ENCODE measurements at regions of chrX and their contacts with region 1.

Region 1: GRCh38 chrX:120457766-120458180 is 11.3 kb downstream of the LAMP2 start:
- DNase-seq: peak; percentile 70
- H3K4me3 ChIP-seq: peak overlapping the region; percentile 56
- H3K27ac ChIP-seq: peak overlapping the region; percentile 88
- H3K4me1 ChIP-seq: peaks cover 69% of the 10 kb centered on the region
- CTCF ChIP-seq: no peak

Region 2: GRCh38 chrX:120302434-120302833 is 155.3 kb before region 1 on chrX:
- CTCF ChIA-PET with region 1: no interaction called
- POLR2A ChIA-PET with region 1: no interaction called
- intact Hi-C with region 1: loop called (anchors 5 kb)
- DNase-seq: peak; percentile 85
- H3K4me3 ChIP-seq: peak overlapping the region; percentile 57
- H3K27ac ChIP-seq: peak overlapping the region; percentile 72
- H3K4me1 ChIP-seq: peaks cover 43% of the 10 kb centered on the region
- CTCF ChIP-seq: no peak

Region 3: DNA sequence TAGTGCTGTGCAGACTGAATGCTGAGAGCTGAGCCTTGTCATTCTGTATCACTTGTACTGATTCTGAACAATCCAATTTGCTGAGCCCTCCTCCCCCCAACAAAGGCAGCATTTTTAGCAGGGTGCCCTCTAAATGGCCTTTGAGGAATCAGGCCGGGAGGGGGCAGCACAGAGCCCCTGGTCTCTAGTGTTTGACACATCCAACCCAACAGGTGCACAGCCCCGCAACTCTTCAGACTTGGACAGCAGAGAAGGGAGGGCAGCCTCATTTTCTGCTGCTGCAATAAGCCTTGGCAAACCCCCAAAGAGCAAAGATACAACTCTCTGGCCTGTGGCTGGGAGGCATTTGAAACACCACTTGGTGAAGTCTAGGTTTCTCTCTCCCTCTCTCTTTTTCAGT is 92.5 kb before region 1 on chrX:
- CTCF ChIA-PET with region 1: interaction called, 3 read pairs
- POLR2A ChIA-PET with region 1: interaction called, 8 read pairs
- intact Hi-C with region 1: loop called (anchors 5 kb)
- DNase-seq: peak; percentile 67
- H3K4me3 ChIP-seq: no peak overlapping the region
- H3K27ac ChIP-seq: no peak overlapping the region
- H3K4me1 ChIP-seq: peaks cover 19% of the 10 kb centered on the region
- CTCF ChIP-seq: peak; percentile 79

Region 4: GRCh38 chrX:120499301-120500072 is 41.7 kb after region 1 on chrX:
- CTCF ChIA-PET with region 1: no interaction called
- POLR2A ChIA-PET with region 1: no interaction called
- intact Hi-C with region 1: no loop called
- DNase-seq: no peak
- H3K4me3 ChIP-seq: no peak overlapping the region
- H3K27ac ChIP-seq: no peak overlapping the region
- H3K4me1 ChIP-seq: no peaks in the 10 kb centered on the region
- CTCF ChIP-seq: no peak

Region 5: DNA sequence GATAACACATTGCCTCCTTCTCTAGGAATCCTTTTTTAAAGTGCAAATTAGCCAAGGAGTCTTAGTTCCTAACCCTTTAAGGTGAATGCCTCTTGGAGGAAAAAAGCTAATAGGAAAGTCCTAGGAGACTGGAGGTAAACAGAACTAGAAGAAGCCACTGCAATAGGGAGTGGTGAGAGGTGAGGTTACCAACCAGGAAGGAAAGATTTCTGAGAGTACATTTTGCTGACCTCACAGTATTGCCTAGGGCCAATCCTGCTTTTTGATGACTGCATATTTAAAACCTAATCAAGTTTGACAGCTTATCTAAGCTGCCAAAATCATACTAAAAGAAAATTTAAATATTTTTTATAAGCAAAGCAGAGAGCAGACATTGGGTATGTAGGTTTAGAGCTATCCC is 110.3 kb after region 1 on chrX:
- CTCF ChIA-PET with region 1: no interaction called
- POLR2A ChIA-PET with region 1: no interaction called
- intact Hi-C with region 1: no loop called
- DNase-seq: no peak
- H3K4me3 ChIP-seq: no peak overlapping the region
- H3K27ac ChIP-seq: no peak overlapping the region
- H3K4me1 ChIP-seq: no peaks in the 10 kb centered on the region
- CTCF ChIP-seq: no peak

Measured in OCI-LY7 (cell line).